ENCODE measurements at regions of chrX and their contacts with region 1.

Region 1: GRCh38 chrX:2967998-2968909 is 38.1 kb upstream of the ARSH start:
- DNase-seq: peak; percentile 44
- H3K4me3 ChIP-seq: no peak overlapping the region
- H3K27ac ChIP-seq: no peak overlapping the region
- H3K4me1 ChIP-seq: no peaks in the 10 kb centered on the region
- H3K27me3 ChIP-seq: no peaks in the 10 kb centered on the region
- CTCF ChIP-seq: no peak

Region 2: DNA sequence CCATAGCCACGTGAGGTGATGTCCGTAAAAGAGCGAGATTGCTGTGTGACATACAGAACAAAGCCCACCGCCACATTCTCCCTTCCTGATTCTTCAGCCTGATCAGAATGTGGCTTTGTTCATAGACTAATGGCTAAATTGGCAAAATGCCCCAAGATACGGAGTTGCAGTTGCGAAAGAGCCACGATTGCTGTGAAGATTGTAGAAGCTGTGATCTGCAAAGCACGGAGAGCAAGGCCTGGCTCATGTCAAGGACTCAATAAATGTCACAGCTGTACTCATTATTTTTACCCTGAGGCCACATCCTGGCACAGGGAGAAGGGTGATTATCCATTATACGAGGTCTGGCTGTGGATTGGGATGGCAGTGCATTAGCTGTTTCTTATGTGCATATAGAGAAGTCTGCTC is 73.4 kb before region 1 on chrX:
- CTCF ChIA-PET with region 1: no interaction called
- dilution Hi-C with region 1: no loop called
- in situ Hi-C with region 1: no loop called
- intact Hi-C with region 1: loop called (anchors 10 kb)
- DNase-seq: no peak
- H3K4me3 ChIP-seq: no peak overlapping the region
- H3K27ac ChIP-seq: no peak overlapping the region
- H3K4me1 ChIP-seq: no peaks in the 10 kb centered on the region
- H3K27me3 ChIP-seq: no peaks in the 10 kb centered on the region
- CTCF ChIP-seq: no peak